ENCODE measurements at regions of chr18 and their contacts with region 1.

Region 1: DNA sequence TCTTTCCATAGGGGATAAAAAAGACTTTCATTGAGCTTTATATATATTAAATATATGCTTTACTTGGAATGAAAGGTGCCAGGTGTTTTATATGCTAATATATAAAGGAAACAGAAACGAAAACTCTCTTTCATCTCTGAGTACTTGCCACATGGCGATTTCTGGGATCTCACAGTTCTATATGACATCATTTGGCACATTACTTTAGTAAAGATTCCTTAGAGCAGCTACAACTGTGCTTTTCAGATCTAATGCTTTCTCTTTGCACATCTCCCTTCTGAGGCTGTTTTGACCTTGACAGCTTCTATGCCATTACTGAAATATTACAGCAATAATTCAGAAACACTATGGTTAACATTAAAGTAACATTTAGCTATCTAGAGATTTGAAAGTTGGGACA is 1082.9 kb upstream of the CDH2 start:
- DNase-seq: no peak

Region 2: DNA sequence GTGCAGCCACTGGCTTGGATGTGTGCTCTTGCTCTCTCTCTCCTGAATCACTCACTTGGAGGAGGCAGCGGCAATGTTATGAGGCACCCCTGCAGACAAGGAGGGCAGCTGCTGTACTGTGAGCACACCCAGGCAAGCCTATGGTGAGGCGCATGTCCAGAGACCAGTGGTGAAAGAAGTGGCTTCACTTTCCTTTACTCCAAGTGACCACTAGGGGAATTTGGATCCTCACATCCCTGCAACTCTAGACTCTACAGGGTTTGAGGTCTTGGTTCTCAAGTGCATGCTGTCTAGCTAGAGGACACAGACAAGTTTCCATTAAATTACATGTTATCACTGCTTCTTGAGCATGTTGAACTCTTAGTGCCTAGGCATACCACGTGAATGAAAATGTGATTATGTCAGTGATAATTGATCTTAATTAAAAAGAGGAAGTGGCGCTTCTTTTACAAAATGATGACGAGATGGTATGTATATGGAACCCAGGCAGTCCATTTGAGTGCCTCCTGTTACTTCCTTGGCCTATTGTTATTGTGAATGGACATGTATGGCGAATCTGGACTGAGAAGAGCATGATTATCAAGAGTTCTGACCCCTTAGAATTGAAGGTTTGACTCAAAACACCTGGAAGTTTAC is 902.0 kb before region 1 on chr18:
- intact Hi-C with region 1: loop called in 1 of 2 experiments (anchors 5 kb)
- DNase-seq: no peak

Region 3: GRCh38 chr18:30387401-30387800 is 1127.6 kb after region 1 on chr18:
- intact Hi-C with region 1: loop called in 1 of 2 experiments (anchors 5 kb)
- DNase-seq: no peak